ENCODE measurements at regions of chr12 and their contacts with region 1.

Region 1: GRCh38 chr12:575948-576612 is 87.2 kb downstream of the NINJ2 start:
- DNase-seq: peak; percentile 73 to 95 (median 81)
- ATAC-seq: peak; percentile 98
- H3K4me3 ChIP-seq: peak overlapping the region; percentile 25 to 34
- H3K4me3 Mint-ChIP-seq: peak overlapping the region; percentile 69
- H3K27ac ChIP-seq: no peak overlapping the region
- H3K27ac Mint-ChIP-seq: peak overlapping the region; percentile 37
- H3K4me1 ChIP-seq: peaks cover 4% of the 10 kb centered on the region
- H3K4me1 Mint-ChIP-seq: peaks cover 14% of the 10 kb centered on the region
- H3K27me3 ChIP-seq: no peaks in the 10 kb centered on the region
- H3K27me3 Mint-ChIP-seq: no peaks in the 10 kb centered on the region
- CTCF ChIP-seq: peak; percentile 98

Region 2: DNA sequence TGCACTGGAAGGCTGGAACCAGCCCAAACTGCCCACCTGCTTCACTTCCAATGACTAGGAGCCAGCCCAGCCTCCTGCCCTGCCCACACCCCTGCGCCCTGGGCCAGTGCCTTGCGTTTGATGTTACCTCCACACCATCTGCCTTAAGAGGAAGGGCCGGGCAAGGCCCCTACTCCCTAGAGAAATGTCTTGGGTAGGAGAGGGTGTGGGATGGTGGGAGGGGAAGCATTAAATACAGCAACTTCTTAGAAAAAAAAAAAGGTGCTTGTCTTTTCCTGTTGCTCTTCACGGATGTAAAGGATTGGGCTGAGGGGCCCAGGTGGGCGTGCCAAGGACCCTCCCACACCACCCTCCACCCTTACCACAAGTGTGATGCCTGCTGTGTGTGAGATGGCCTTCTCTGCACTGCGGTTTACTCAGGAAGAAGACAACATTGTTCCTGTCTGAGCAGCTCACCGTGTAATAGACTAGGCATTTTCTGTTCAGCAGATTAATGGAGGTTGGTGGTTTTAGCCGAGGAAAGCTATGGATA is 12.8 kb before region 1 on chr12:
- CTCF ChIA-PET with region 1: interaction called, 45 read pairs
- POLR2A ChIA-PET with region 1: interaction called, 5 read pairs
- intact Hi-C with region 1: loop called in 1 of 2 experiments (anchors 1 kb)
- DNase-seq: peak; percentile 19 to 88 (median 70)
- ATAC-seq: peak; percentile 94
- H3K4me3 ChIP-seq: peak overlapping the region; percentile 26 to 47
- H3K4me3 Mint-ChIP-seq: peak overlapping the region; percentile 83
- H3K27ac ChIP-seq: peak overlapping the region; percentile 68 to 87
- H3K27ac Mint-ChIP-seq: peak overlapping the region; percentile 97
- H3K4me1 ChIP-seq: peaks cover 66% of the 10 kb centered on the region
- H3K4me1 Mint-ChIP-seq: peaks cover 86% of the 10 kb centered on the region
- H3K27me3 ChIP-seq: no peaks in the 10 kb centered on the region
- H3K27me3 Mint-ChIP-seq: no peaks in the 10 kb centered on the region
- CTCF ChIP-seq: no peak

Region 3: GRCh38 chr12:630656-631632 is 54.9 kb after region 1 on chr12:
- CTCF ChIA-PET with region 1: interaction called, 5 read pairs
- POLR2A ChIA-PET with region 1: no interaction called
- intact Hi-C with region 1: loop called in 1 of 2 experiments (anchors 2 kb)
- DNase-seq: peak in 8 of 9 experiments; percentile 19 to 83 (median 64)
- ATAC-seq: peak; percentile 93
- H3K4me3 ChIP-seq: peak overlapping the region in 1 of 2 experiments; percentile 54
- H3K4me3 Mint-ChIP-seq: peak overlapping the region; percentile 78
- H3K27ac ChIP-seq: peak overlapping the region in 1 of 2 experiments; percentile 53
- H3K27ac Mint-ChIP-seq: peak overlapping the region; percentile 93
- H3K4me1 ChIP-seq: no peaks in the 10 kb centered on the region
- H3K4me1 Mint-ChIP-seq: peaks cover 14% of the 10 kb centered on the region
- H3K27me3 ChIP-seq: no peaks in the 10 kb centered on the region
- H3K27me3 Mint-ChIP-seq: no peaks in the 10 kb centered on the region
- CTCF ChIP-seq: no peak

Region 4: GRCh38 chr12:642633-643474 is 66.8 kb after region 1 on chr12:
- CTCF ChIA-PET with region 1: interaction called, 8 read pairs
- POLR2A ChIA-PET with region 1: no interaction called
- intact Hi-C with region 1: loop called (anchors 5 kb)
- DNase-seq: peak; percentile 39 to 91 (median 77)
- ATAC-seq: peak; percentile 75
- H3K4me3 ChIP-seq: peak overlapping the region; percentile 62 to 70
- H3K4me3 Mint-ChIP-seq: peak overlapping the region; percentile 89
- H3K27ac ChIP-seq: peak overlapping the region; percentile 72 to 88
- H3K27ac Mint-ChIP-seq: peak overlapping the region; percentile 97
- H3K4me1 ChIP-seq: peaks cover 36% of the 10 kb centered on the region
- H3K4me1 Mint-ChIP-seq: peaks cover 54% of the 10 kb centered on the region
- H3K27me3 ChIP-seq: no peaks in the 10 kb centered on the region
- H3K27me3 Mint-ChIP-seq: no peaks in the 10 kb centered on the region
- CTCF ChIP-seq: peak; percentile 34